ENCODE measurements at regions of chr19 and their contacts with region 1.

Region 1: GRCh38 chr19:12890787-12891552 is at the start of gene GCDH:
- DNase-seq: peak; percentile 99
- H3K4me3 ChIP-seq: peak within 1 kb of the TSS; percentile 89 to 92
- H3K27ac ChIP-seq: peak within 1 kb of the TSS; percentile 71
- H3K4me1 ChIP-seq: peaks cover 16% of the 10 kb centered on the region
- H3K27me3 ChIP-seq: no peaks in the 10 kb centered on the region
- CTCF ChIP-seq: no peak
- POLR2A ChIP-seq: peak in 1 of 2 donors; percentile 40
- total RNA-seq, gene GCDH: 23.6 TPM

Region 2: GRCh38 chr19:11346092-11346940 is 1544.7 kb before region 1 on chr19 and contains the starts of genes CCDC159 and TMEM205:
- intact Hi-C with region 1: loop called (anchors 10 kb)
- DNase-seq: peak in 1 of 2 donors; percentile 100
- H3K4me3 ChIP-seq: peak within 1 kb of the TSS; percentile 60 to 86
- H3K27ac ChIP-seq: peak within 1 kb of the TSS; percentile 76
- H3K4me1 ChIP-seq: peaks cover 35% of the 10 kb centered on the region
- H3K27me3 ChIP-seq: no peaks in the 10 kb centered on the region
- CTCF ChIP-seq: peak in 1 of 3 experiments; percentile 10
- POLR2A ChIP-seq: peak in 1 of 2 donors; percentile 80
- total RNA-seq, gene CCDC159: 24.1 TPM
- total RNA-seq, gene TMEM205: 173 TPM

Region 3: DNA sequence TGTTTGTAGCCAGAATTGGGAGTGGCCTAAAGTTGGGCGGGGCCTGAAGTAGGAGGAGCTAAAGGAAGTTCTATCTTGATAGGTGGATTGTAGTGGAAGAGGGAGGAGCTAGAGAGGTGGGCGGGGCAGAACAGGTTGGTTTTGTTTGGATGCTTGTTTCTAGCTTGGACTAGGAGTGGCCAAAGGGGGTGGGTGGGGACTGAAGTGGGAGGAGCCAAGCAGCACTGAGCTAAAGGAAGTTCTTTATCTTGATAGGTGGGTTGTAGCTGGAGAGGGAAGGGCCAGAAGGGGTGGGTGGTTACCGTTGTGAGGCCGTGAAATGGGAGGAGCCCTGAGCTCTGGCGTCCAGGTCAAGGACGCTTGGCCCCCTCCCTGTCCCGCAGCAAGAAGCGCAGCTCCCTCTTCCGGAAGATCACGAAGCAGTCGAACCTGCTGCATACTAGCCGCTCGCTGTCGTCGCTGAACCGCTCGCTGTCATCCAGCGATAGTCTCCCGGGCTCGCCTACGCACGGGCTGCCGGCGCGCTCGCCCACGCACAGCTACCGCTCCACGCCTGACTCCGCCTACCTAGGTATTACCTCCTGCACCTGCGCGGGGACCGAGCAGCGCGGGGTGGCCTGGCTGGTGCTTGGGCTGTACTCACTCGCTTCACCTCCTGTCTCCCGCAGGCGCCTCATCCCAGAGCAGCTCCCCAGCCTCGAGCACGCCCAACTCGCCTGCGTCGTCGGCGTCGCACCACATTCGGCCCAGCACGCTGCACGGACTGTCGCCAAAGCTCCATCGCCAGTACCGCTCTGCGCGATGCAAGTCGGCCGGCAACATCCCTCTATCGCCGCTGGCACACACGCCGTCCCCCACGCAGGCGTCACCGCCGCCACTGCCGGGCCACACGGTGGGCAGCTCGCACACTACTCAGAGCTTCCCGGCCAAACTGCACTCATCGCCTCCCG is 17.8 kb before region 1 on chr19:
- intact Hi-C with region 1: no loop called
- DNase-seq: no peak
- H3K4me3 ChIP-seq: peak overlapping the region in 1 of 2 donors; percentile 19
- H3K27ac ChIP-seq: no peak overlapping the region
- H3K4me1 ChIP-seq: no peaks in the 10 kb centered on the region
- H3K27me3 ChIP-seq: no peaks in the 10 kb centered on the region
- CTCF ChIP-seq: no peak
- POLR2A ChIP-seq: no peak

Region 4: GRCh38 chr19:12945479-12946091 is 54.6 kb after region 1 on chr19 and contains the start of gene RAD23A:
- intact Hi-C with region 1: no loop called
- DNase-seq: peak in 1 of 2 donors; percentile 96
- H3K4me3 ChIP-seq: peak within 1 kb of the TSS; percentile 70 to 97
- H3K27ac ChIP-seq: peak within 1 kb of the TSS; percentile 94
- H3K4me1 ChIP-seq: peaks cover 68% of the 10 kb centered on the region
- H3K27me3 ChIP-seq: no peaks in the 10 kb centered on the region
- CTCF ChIP-seq: no peak
- POLR2A ChIP-seq: peak in 1 of 2 donors; percentile 80
- total RNA-seq, gene RAD23A: 85.9 TPM

Measured in vagina (tissue), 2 donors.